Transverse colon (tissue), 4 donors: ENCODE measurements at regions of chr16 and their contacts with region 1.

Region 1: GRCh38 chr16:30984669-30985400 is at the start of gene HSD3B7:
- DNase-seq: peak; percentile 93
- H3K4me3 ChIP-seq: peak within 1 kb of the TSS; percentile 13 to 54 (median 40)
- H3K27ac ChIP-seq: peak within 1 kb of the TSS; percentile 68 to 83 (median 75)
- H3K4me1 ChIP-seq: peaks cover 9 to 12% (median 10%) of the 10 kb centered on the region in 4 donors
- H3K27me3 ChIP-seq: no peaks in the 10 kb centered on the region
- CTCF ChIP-seq: peak; percentile 92 to 98 (median 94)
- EP300 ChIP-seq: no peak
- POLR2A ChIP-seq: peak; percentile 42
- total RNA-seq, gene HSD3B7: 7.0 to 31.8 (median 29.6) TPM

Region 2: DNA sequence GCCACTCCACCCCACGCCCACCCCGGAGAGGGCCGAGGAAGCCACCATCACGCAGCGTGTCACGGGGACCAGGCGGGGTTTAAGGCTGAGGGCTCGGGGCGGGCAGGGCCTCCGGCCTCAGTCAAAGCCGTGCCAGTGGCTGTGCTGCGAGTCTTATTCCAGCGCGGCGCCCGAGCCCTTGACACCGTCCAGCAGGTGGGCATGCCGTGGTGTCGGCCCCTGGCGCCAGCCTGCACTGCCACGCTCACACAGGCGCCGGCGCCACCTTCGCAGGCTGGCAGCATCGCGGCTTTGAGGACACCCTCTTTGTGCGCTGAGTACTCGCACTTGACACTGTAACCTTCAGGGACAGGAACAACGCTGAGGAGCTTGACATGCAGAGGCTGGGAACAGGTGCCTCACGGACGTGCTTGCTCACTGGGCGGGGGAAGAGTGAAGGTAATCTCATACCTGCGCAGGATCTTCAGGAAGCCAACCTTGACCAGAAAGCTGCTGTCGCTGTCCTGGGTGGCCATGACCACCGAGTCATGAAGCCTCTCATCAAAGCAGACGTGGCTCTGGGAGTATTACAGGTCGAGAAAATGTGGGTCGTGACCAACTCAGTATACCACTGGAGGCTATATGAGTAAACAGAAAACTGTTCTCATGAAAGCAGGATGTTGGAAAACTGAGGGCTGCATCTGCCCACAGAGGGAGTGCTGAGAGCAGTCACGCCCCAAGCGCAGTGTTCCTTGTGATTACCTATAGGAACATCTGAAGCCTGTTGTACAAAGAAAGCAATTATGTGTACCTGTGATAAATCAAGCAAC is 163.7 kb before region 1 on chr16:
- in situ Hi-C with region 1: no loop called
- intact Hi-C with region 1: no loop called
- DNase-seq: peak; percentile 57
- H3K4me3 ChIP-seq: no peak overlapping the region
- H3K27ac ChIP-seq: peak overlapping the region in 3 of 4 donors; percentile 34 to 61 (median 51)
- H3K4me1 ChIP-seq: peaks cover 0 to 18% (median 2%) of the 10 kb centered on the region in 4 donors
- H3K27me3 ChIP-seq: no peaks in the 10 kb centered on the region
- CTCF ChIP-seq: no peak
- EP300 ChIP-seq: no peak
- POLR2A ChIP-seq: no peak

Region 3: GRCh38 chr16:31094424-31095120 is 109.7 kb after region 1 on chr16 and contains the start of gene VKORC1:
- in situ Hi-C with region 1: loop called in 1 of 4 experiments (anchors 10 kb)
- intact Hi-C with region 1: no loop called
- DNase-seq: peak; percentile 96
- H3K4me3 ChIP-seq: peak within 1 kb of the TSS; percentile 60 to 77 (median 67)
- H3K27ac ChIP-seq: peak within 1 kb of the TSS; percentile 85 to 98 (median 94)
- H3K4me1 ChIP-seq: peaks cover 6 to 24% (median 18%) of the 10 kb centered on the region in 4 donors
- H3K27me3 ChIP-seq: no peaks in the 10 kb centered on the region
- CTCF ChIP-seq: peak in 1 of 5 experiments; percentile 14
- EP300 ChIP-seq: no peak
- POLR2A ChIP-seq: peak; percentile 61
- total RNA-seq, gene VKORC1: 29.5 to 89.0 (median 72.0) TPM

Region 4: DNA sequence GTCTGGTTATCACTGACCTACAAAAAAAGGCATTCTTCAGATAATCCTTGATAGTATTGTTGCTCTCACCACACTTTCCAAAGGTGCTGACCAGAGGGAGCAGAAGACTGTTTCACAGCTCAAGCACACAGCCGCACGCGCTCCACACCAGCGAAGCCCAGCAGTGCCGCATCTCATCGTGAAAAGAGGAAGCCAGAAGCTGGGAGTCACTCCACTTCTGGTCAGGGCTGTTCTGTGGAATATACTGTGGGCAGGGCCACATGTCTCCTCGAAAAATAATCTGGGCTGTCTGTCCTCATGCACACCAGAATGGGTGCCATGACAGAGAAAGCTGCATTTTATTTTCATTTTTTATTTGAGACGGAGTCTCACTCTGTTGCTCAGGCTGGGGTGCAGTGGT is 172.3 kb after region 1 on chr16:
- in situ Hi-C with region 1: loop called in 1 of 4 experiments (anchors 25 kb)
- intact Hi-C with region 1: no loop called
- DNase-seq: peak; percentile 17
- H3K4me3 ChIP-seq: no peak overlapping the region
- H3K27ac ChIP-seq: no peak overlapping the region
- H3K4me1 ChIP-seq: peaks cover 0 to 11% (median 1%) of the 10 kb centered on the region in 4 donors
- H3K27me3 ChIP-seq: peaks cover 11% of the 10 kb centered on the region
- CTCF ChIP-seq: no peak
- EP300 ChIP-seq: no peak
- POLR2A ChIP-seq: no peak

Region 5: DNA sequence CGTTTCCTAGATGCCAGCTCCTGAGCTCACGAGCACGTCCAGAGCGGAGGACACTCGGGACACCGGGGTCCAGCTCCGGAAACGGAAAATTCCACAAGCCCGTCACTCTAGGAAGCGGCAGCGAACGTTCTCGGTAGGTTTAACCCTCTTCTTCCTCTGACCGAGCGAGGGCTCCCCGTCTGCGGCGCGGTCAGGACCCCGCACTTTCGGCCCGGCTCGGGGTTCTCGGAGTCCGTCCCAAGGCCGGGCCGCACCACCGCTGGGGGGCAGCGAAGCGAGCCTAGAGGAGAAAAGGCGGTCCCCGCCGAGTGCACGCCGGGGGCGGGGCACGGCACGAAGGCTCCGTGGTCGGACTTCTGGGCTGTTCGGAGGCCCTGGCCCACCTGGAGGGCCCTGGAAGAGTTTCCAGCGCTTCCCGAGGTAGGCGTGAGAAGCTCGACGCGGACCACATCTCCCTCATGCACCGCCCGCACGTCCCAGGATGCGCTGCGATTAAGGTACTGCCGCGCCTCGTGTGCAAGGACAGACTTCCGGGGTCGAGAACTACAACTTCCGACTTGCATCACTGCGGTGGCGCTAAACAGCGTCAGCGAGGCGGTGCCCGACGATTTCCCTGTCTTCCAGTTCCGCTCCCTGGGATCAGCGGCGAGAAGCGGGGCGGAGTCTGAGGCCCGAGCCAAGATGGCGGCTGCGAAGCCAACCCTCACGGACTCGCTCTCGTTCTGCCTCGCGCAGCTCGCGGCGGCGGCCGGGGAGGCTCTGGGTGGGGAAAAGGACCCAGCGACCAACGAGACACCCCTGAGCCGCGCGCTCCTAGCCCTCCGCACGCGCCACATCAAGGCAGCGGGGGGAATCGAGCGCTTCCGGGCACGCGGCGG is 474.2 kb after region 1 on chr16 and contains the start of gene ARMC5:
- in situ Hi-C with region 1: loop called in 1 of 4 experiments (anchors 25 kb)
- intact Hi-C with region 1: no loop called
- DNase-seq: peak; percentile 98
- H3K4me3 ChIP-seq: peak within 1 kb of the TSS; percentile 73 to 97 (median 78)
- H3K27ac ChIP-seq: peak within 1 kb of the TSS; percentile 97 to 99 (median 98)
- H3K4me1 ChIP-seq: peaks cover 25 to 50% (median 44%) of the 10 kb centered on the region in 4 donors
- H3K27me3 ChIP-seq: no peaks in the 10 kb centered on the region
- CTCF ChIP-seq: peak; percentile 45 to 80 (median 60)
- EP300 ChIP-seq: no peak
- POLR2A ChIP-seq: peak; percentile 65
- total RNA-seq, gene ARMC5: 3.2 to 17.6 (median 8.4) TPM

Region 6: DNA sequence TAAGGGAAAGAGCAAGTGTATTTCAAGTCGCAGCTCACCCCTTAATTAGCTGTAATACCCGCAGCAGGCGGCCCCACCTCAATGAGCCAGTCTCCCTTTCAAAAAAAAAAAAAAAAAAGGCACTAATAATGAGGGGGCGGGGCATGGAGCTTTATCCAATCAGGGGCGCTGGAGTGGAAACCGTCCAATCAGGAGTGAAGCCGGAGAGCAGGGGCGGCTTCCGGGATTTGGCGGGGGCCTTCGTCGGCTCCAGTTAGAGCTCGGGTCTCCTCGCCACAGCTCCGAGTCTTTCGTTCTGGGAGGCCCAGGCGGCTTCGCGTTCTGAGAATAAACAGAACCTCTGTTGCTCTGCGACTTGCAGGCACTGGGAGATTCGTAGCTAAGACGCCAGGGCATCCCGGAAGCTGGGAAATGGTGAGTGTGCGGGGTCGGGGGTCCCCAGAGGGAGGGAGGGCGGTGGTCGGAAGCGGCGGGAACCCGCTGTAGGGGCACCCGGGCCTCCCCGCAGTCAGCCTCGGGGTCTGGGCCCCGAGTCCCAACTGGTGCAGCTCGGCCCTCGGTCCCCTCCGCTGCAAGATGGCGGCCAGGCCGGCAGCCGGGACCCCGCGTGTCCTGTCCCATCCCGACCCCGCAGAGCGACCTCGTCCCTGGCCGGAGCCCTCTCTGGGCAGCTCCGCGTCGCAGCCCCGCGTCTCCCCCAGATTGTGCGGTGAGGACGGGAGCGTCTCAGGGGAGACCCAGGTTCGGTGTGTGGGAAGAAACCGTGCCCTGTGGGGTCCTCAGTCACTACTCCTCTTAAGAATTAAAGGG is 888.9 kb after region 1 on chr16 and contains the start of gene ZNF267:
- in situ Hi-C with region 1: loop called in 3 of 4 experiments (anchors 10 to 25 kb)
- intact Hi-C with region 1: no loop called
- DNase-seq: peak; percentile 95
- H3K4me3 ChIP-seq: peak within 1 kb of the TSS; percentile 94 to 100 (median 100)
- H3K27ac ChIP-seq: peak within 1 kb of the TSS; percentile 93 to 99 (median 98)
- H3K4me1 ChIP-seq: peaks cover 30 to 51% (median 37%) of the 10 kb centered on the region in 4 donors
- H3K27me3 ChIP-seq: no peaks in the 10 kb centered on the region
- CTCF ChIP-seq: no peak
- EP300 ChIP-seq: no peak
- POLR2A ChIP-seq: peak; percentile 89
- total RNA-seq, gene ZNF267: 3.4 to 14.1 (median 9.0) TPM